H1 (cell line): ENCODE measurements at regions of chr1 and their contacts with region 1.

Region 1: DNA sequence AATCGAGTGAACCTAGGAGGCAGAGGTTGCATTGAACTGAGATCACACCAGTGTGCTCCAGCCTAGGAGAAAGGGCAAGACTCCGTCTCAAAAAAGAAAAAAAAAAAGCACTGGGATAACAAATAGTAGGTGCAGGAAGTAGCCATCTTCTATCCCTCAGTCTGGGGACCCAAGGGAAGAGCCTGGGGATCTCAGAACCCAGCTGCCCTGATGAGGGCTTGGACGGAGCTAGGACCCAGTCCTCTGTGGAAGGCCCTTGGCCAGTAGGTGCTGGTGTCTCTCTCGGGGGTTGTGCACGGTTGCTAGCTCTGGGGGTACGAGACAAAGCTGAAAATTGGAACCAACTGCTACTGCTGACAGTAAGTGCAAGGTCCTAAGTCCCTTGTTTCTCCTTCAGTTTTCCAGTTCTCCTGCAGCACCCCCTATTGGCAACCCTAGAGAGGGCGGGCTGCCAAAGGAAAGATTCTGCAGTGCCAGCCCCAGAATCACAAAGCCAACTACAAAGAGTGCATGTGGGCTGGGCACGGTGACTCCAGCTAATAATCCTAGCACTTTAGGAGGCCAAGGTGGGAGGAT is 57.6 kb upstream of the KIF1B start:
- DNase-seq: peak in 1 of 2 experiments; percentile 87
- H3K4me3 ChIP-seq: no peak overlapping the region
- H3K27ac ChIP-seq: no peak overlapping the region
- H3K4me1 ChIP-seq: no peaks in the 10 kb centered on the region; a peak in 1 of 7 replicates
- H3K27me3 ChIP-seq: no peaks in the 10 kb centered on the region
- CTCF ChIP-seq: peak; percentile 67 to 90 (median 80)
- EP300 ChIP-seq: no peak
- POLR2A ChIP-seq: no peak
- RAD21 ChIP-seq: peak; percentile 72 to 82

Region 2: GRCh38 chr1:10132852-10133251 is 19.9 kb before region 1 on chr1:
- CTCF ChIA-PET with region 1: interaction called, 11 read pairs
- POLR2A ChIA-PET with region 1: no interaction called
- DNase-seq: no peak
- H3K4me3 ChIP-seq: no peak overlapping the region
- H3K27ac ChIP-seq: no peak overlapping the region
- H3K4me1 ChIP-seq: no peaks in the 10 kb centered on the region
- H3K27me3 ChIP-seq: no peaks in the 10 kb centered on the region
- CTCF ChIP-seq: no peak
- EP300 ChIP-seq: no peak
- POLR2A ChIP-seq: no peak
- RAD21 ChIP-seq: no peak

Region 3: GRCh38 chr1:10140981-10141380 is 11.8 kb before region 1 on chr1:
- CTCF ChIA-PET with region 1: interaction called, 12 read pairs
- POLR2A ChIA-PET with region 1: no interaction called
- DNase-seq: no peak
- H3K4me3 ChIP-seq: no peak overlapping the region
- H3K27ac ChIP-seq: no peak overlapping the region
- H3K4me1 ChIP-seq: no peaks in the 10 kb centered on the region
- H3K27me3 ChIP-seq: no peaks in the 10 kb centered on the region
- CTCF ChIP-seq: no peak
- EP300 ChIP-seq: no peak
- POLR2A ChIP-seq: no peak
- RAD21 ChIP-seq: no peak

Region 4: GRCh38 chr1:10322821-10323220 is 170.0 kb after region 1 on chr1:
- CTCF ChIA-PET with region 1: no interaction called
- POLR2A ChIA-PET with region 1: no interaction called
- DNase-seq: no peak
- H3K4me3 ChIP-seq: no peak overlapping the region
- H3K27ac ChIP-seq: no peak overlapping the region
- H3K4me1 ChIP-seq: peaks cover 0 to 5% (median 1%) of the 10 kb centered on the region in 4 experiments; a peak in 3 of 7 replicates
- H3K27me3 ChIP-seq: no peaks in the 10 kb centered on the region
- CTCF ChIP-seq: no peak
- EP300 ChIP-seq: no peak
- POLR2A ChIP-seq: no peak
- RAD21 ChIP-seq: no peak